Activated naive CD4-positive, alpha-beta T cell treated with anti-CD3 and anti-CD28 coated beads, Interleukin-2, amount 10 ng/mL, durations not matched to agents 7 days and 5 days (primary cell): ENCODE measurements at regions of chr16 and their contacts with region 1.

Region 1: GRCh38 chr16:2874912-2875362 is 8.1 kb upstream of the FLYWCH2 start:
- DNase-seq: peak; percentile 77
- H3K4me3 Mint-ChIP-seq: no peak overlapping the region
- H3K27ac Mint-ChIP-seq: no peak overlapping the region
- H3K4me1 Mint-ChIP-seq: peaks cover 6% of the 10 kb centered on the region
- H3K27me3 Mint-ChIP-seq: peaks cover 52% of the 10 kb centered on the region

Region 2: DNA sequence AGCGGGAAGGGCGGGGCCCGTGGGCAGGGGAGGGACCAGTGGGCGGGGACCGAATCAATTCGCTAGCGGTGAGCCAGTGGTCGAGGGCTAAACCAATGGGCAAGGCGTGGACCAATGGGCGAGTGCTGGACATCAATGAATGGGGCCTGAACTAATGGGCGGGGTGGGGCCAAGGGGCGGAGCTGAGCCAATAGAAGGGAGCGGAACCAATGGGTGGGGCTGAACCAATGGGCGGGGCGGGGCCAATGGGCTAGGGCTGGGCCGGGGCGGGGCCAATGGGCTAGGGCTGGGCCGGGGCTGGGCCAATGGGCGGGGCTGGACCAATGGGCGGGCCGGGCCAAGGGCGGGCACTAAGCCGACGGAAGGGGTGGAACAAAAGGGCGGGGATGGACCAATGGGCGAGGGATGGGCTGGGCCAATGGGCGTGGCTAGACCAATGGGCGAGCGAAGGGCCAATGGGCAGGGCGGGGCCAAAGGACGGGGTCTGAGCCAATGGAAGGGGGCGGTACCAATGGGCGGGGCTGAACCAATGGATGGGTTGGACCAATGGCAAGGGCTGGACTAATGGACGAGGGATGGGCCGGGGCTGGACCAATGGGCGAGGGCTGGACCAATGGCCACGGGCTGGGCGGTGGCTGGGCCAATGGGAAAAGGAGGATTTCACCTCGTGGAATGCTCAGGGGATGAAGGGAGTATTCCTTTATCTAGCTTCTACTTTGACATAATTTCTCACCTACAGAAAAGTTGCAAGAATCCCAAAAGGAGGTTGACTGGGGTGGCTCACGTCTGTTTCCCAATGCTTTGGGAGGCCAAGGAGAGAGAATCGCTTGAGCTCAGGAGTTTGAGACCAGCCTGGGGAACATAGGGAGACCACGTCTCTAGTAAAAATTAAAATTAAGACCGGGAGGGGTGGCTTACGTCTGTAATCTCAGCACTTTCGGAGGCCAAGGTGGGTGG is 30.8 kb after region 1 on chr16:
- CTCF ChIA-PET with region 1: interaction called, 10 read pairs
- DNase-seq: peak; percentile 98
- H3K4me3 Mint-ChIP-seq: peak overlapping the region; percentile 96
- H3K27ac Mint-ChIP-seq: peak overlapping the region; percentile 92
- H3K4me1 Mint-ChIP-seq: peaks cover 30% of the 10 kb centered on the region
- H3K27me3 Mint-ChIP-seq: peaks cover 16% of the 10 kb centered on the region

Region 3: GRCh38 chr16:3059000-3059722 is 184.2 kb after region 1 on chr16:
- CTCF ChIA-PET with region 1: no interaction called
- DNase-seq: peak; percentile 89
- H3K4me3 Mint-ChIP-seq: peak overlapping the region; percentile 96
- H3K27ac Mint-ChIP-seq: peak overlapping the region; percentile 92
- H3K4me1 Mint-ChIP-seq: peaks cover 79% of the 10 kb centered on the region
- H3K27me3 Mint-ChIP-seq: no peaks in the 10 kb centered on the region